ENCODE measurements at regions of chr5 and their contacts with region 1.

Region 1: DNA sequence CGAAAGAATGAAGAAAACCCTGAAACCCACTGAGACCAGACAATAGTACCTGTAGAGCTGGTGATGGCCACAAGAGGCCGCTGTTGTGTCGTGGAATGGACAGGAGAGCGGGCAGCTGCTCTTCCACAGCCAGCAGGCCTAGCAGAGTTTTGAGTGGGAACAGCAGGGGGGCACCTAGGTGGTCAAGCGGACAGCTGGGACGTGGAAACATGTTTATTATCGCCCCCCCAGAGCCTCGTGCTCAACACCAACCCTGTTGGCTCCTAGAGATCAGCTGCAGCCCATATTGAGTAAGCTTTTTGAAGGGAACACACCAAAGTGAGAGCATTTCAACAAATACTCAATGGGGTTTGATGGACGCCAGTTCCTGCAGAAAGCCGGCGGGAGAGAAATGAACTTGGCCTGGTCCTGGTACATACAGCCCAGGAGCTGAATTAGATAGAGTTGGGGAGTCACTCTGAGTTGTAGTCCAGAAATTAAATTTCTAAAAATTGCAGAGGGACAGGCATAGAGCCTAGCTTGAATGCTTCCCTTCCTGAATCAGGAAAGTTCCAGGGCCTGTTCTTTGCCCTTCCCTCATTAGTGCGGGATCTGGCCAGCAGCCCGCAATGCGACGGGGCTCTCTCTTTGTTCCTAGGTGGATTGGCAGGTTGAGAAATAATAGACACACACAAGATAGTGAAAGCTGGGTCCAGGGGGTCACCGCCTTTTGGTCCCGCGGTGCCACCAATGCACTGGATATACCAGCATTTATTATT is 33.8 kb downstream of the MFAP3 start:
- DNase-seq: peak; percentile 89
- H3K4me3 ChIP-seq: no peak overlapping the region
- H3K27ac ChIP-seq: no peak overlapping the region
- H3K4me1 ChIP-seq: peaks cover 0 to 9% (median 3%) of the 10 kb centered on the region in 4 donors
- H3K27me3 ChIP-seq: no peaks in the 10 kb centered on the region
- CTCF ChIP-seq: peak; percentile 84 to 98 (median 88)
- EP300 ChIP-seq: no peak
- POLR2A ChIP-seq: no peak

Region 2: DNA sequence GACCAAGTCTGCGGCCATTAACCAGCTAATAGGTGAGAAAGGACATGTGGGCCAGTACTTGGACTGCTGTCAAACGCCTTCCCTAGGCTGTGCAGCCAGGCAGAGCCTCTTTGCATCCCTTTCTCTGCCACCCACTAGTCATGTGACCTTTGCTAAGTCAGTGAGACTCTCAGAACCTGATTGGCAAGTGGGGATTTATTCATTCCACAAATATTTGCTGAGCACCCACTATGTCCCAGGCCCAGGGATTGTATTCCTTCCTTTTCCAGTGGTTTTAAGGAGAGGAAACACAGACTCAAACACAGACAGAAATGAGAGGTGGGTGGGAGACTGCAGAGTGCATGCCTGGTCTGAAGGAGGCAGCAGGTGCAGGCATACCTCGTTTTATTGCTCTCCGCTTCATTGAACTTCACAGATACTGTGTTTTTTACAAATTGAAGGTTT is 46.3 kb after region 1 on chr5:
- intact Hi-C with region 1: no loop called
- DNase-seq: no peak
- H3K4me3 ChIP-seq: no peak overlapping the region
- H3K27ac ChIP-seq: no peak overlapping the region
- H3K4me1 ChIP-seq: no peaks in the 10 kb centered on the region
- H3K27me3 ChIP-seq: no peaks in the 10 kb centered on the region
- CTCF ChIP-seq: no peak
- EP300 ChIP-seq: no peak
- POLR2A ChIP-seq: no peak

Region 3: GRCh38 chr5:154179846-154180710 is 107.5 kb after region 1 on chr5:
- intact Hi-C with region 1: loop called (anchors 1 kb)
- DNase-seq: peak; percentile 71
- H3K4me3 ChIP-seq: no peak overlapping the region
- H3K27ac ChIP-seq: no peak overlapping the region
- H3K4me1 ChIP-seq: peaks cover 0 to 9% (median 4%) of the 10 kb centered on the region in 4 donors
- H3K27me3 ChIP-seq: no peaks in the 10 kb centered on the region
- CTCF ChIP-seq: peak in 3 of 4 experiments; percentile 73 to 83 (median 76)
- EP300 ChIP-seq: no peak
- POLR2A ChIP-seq: no peak

Region 4: DNA sequence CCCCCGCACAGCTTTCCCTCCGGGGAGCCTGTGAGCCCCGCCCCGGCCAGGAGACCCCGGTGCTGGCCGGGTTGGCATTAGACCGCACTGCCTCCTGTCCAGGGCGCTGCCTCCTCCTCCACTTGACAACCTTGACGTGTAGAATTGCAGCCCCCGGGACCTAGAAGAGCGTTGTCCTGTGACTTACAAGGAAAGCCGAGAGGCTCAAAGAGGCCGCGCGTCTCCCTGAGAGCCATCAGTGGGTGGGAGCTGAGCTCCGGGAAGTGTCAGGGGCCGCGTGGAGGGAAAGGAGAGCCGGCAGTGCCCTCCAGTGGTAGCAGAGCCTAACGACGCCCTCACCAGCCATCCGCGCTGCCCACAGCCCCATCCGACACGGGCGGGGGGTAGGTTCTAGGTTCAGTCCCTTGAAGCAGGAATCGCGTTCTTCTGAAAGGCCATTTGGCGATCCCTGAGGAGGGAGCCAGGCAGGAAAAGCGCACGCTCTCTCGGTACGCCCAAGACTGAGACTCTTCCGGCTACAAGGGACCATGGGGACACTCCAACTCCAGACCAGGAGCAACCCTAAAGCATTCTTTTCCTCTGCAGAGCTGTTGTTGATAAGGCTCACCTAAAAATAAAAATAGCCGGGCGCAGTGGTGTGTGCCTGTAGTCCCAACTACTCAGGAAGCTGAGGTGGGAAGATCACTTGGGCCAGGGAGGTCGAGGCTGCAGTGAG is 332.6 kb after region 1 on chr5:
- intact Hi-C with region 1: loop called (anchors 1 kb)
- DNase-seq: peak; percentile 90
- H3K4me3 ChIP-seq: peak overlapping the region in 3 of 4 donors; percentile 17 to 46 (median 38)
- H3K27ac ChIP-seq: peak overlapping the region in 1 of 4 donors; percentile 32
- H3K4me1 ChIP-seq: peaks cover 0 to 16% (median 12%) of the 10 kb centered on the region in 4 donors
- H3K27me3 ChIP-seq: no peaks in the 10 kb centered on the region
- CTCF ChIP-seq: peak; percentile 80 to 91 (median 81)
- EP300 ChIP-seq: no peak
- POLR2A ChIP-seq: no peak

Region 5: GRCh38 chr5:154418344-154418820 is 345.8 kb after region 1 on chr5:
- intact Hi-C with region 1: no loop called
- DNase-seq: no peak
- H3K4me3 ChIP-seq: no peak overlapping the region
- H3K27ac ChIP-seq: no peak overlapping the region
- H3K4me1 ChIP-seq: no peaks in the 10 kb centered on the region
- H3K27me3 ChIP-seq: no peaks in the 10 kb centered on the region
- CTCF ChIP-seq: no peak
- EP300 ChIP-seq: no peak
- POLR2A ChIP-seq: no peak

Region 6: DNA sequence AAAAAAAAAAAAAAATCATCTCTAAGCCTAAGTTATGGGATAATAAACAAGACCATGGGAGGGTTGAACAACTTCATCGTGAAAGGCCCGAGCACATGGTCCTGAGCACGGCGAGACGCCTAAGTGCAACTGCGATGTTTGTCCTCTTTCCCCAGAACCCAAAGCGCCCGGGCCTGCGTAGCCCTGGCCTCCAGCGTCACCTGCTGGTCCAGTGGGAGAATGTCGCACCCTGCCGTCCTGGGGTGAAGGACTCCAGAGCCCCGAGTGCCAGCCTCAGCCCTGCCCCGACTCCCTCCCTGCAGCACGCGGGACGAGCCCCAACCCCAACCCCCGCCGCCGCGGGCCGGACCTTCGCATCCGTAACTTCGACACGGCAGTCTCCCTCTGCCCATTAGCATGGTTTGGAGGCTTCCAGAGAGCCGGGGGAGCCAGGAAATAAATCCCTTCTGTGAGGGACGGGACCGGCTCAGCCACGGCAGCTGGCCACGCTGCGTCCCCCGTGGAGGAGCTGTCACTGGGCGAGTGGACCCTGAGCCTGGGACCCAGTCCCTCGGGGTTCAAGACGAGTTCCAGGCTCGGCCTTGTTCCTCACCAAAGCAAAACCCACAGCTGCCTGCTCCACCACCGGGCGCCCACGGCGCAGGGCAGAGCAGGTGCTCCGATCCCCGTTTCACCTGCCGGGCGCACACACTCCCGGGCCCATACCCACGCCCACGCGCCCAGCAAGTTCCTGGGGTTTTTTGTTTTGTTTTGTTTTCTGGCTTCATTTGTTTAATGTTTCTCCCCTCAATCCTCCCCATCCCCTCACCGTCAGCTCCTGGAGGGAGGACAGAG is 537.9 kb after region 1 on chr5:
- intact Hi-C with region 1: loop called (anchors 10 kb)
- DNase-seq: peak; percentile 91
- H3K4me3 ChIP-seq: peak overlapping the region; percentile 15 to 49 (median 43)
- H3K27ac ChIP-seq: no peak overlapping the region
- H3K4me1 ChIP-seq: peaks cover 0 to 39% (median 29%) of the 10 kb centered on the region in 4 donors
- H3K27me3 ChIP-seq: peaks cover 0 to 21% (median 0%) of the 10 kb centered on the region in 3 donors
- CTCF ChIP-seq: peak; percentile 88 to 93 (median 93)
- EP300 ChIP-seq: no peak
- POLR2A ChIP-seq: no peak